ENCODE measurements at regions of chr17 and their contacts with region 1.

Region 1: DNA sequence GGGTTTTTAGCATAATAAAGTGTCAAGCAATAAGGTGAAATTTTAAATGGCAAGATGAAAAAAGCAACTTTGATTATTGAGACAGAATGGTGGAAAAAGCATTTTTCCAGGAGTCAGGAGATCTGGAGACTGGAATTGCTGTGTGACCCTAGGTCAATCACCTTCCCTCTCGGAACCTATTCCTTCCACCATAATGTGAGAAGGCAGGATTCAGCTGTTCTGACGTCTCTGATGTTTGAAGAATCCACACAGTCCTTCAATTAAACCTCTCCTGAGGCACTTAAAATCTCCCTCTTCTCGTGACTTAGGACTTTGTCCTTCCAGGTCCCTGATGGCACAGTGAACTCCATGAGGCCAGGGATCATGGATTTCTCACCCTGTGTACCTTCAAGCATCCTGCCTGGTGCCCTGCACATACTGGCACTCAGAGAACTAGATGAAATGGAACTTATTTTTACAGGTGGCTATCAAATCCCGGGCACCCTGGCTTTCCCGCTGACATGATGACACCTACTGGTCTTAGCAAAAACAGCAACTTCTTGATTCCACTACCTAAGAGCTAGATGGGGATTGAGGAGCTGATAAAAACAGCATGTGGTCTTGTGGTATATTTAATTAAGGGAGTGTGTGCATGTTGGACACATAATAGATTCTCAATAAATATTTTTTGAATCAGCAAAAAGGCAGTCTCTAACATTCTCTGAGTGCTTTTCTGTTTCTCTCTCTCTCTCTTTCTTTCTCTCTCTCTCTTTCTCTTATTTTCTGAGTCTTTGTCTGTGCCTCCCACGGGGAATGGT is 2.3 kb upstream of the CCDC182 start:
- DNase-seq: peak; percentile 68
- CTCF ChIP-seq: peak; percentile 73

Region 2: GRCh38 chr17:57271821-57272220 is 475.6 kb before region 1 on chr17:
- CTCF ChIA-PET with region 1: no interaction called
- POLR2A ChIA-PET with region 1: no interaction called
- DNase-seq: no peak
- CTCF ChIP-seq: no peak

Region 3: GRCh38 chr17:57761887-57762286 is 14.5 kb after region 1 on chr17:
- CTCF ChIA-PET with region 1: interaction called, 12 read pairs
- POLR2A ChIA-PET with region 1: no interaction called
- DNase-seq: no peak
- CTCF ChIP-seq: no peak

Region 4: GRCh38 chr17:57987580-57988421 is 240.4 kb after region 1 on chr17 and contains the start of gene VEZF1:
- CTCF ChIA-PET with region 1: no interaction called
- POLR2A ChIA-PET with region 1: no interaction called
- DNase-seq: peak; percentile 86
- CTCF ChIP-seq: no peak

Measured in GM10248 (cell line).